ENCODE measurements at regions of chrX and their contacts with region 1.

Region 1: DNA sequence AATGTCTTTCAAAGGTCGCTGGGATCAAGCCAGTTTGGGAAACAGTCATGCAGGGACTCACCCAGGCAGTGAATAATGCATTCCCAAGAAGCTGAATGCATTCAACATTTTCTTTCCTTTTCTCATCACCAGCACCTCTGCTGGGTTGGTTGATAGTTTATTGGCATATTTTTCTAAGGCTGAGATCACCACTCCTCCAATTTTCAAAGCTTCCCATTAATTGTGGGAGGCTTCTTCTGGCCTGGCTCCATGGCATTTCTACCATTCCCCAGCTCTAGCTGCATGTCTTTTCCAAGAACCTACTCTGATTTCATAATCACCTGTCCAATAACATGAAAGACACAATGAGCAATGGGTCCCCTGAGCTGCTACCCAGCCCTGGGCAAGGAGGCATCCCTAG is 35.8 kb downstream of the CHRDL1 start:
- DNase-seq: no peak
- H3K4me3 ChIP-seq: no peak overlapping the region
- H3K27ac ChIP-seq: no peak overlapping the region
- H3K4me1 ChIP-seq: peaks cover 18% of the 10 kb centered on the region
- H3K27me3 ChIP-seq: no peaks in the 10 kb centered on the region
- CTCF ChIP-seq: no peak

Region 2: GRCh38 chrX:110509755-110510532 is 249.8 kb before region 1 on chrX:
- CTCF ChIA-PET with region 1: no interaction called
- POLR2A ChIA-PET with region 1: no interaction called
- intact Hi-C with region 1: no loop called
- DNase-seq: peak; percentile 26 to 72
- H3K4me3 ChIP-seq: no peak overlapping the region
- H3K27ac ChIP-seq: peak overlapping the region; percentile 42
- H3K4me1 ChIP-seq: peaks cover 17% of the 10 kb centered on the region; the same call in 1 of the 2 replicates
- H3K27me3 ChIP-seq: no peaks in the 10 kb centered on the region
- CTCF ChIP-seq: no peak

Region 3: DNA sequence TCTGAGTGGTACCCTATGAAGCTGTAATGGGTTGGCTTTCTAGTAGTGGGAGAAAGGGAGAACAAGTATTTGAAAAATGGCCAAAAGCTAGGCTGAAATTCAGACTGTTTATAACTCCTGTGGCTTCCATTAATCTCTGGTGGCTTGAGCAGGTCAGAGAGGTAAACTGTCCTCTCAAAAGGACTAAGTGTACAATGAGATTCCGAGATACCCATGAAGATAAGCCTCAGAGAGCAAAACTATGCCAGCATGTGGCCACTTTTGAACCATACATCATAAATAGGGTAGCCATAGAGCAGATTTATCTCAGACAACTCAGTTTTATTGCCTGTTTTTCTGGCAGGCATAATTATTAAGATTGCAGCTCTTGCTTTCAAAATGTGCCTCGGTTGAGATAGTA is 53.3 kb before region 1 on chrX:
- CTCF ChIA-PET with region 1: no interaction called
- POLR2A ChIA-PET with region 1: no interaction called
- intact Hi-C with region 1: no loop called
- DNase-seq: no peak
- H3K4me3 ChIP-seq: no peak overlapping the region
- H3K27ac ChIP-seq: no peak overlapping the region
- H3K4me1 ChIP-seq: no peaks in the 10 kb centered on the region
- H3K27me3 ChIP-seq: no peaks in the 10 kb centered on the region
- CTCF ChIP-seq: no peak

Region 4: DNA sequence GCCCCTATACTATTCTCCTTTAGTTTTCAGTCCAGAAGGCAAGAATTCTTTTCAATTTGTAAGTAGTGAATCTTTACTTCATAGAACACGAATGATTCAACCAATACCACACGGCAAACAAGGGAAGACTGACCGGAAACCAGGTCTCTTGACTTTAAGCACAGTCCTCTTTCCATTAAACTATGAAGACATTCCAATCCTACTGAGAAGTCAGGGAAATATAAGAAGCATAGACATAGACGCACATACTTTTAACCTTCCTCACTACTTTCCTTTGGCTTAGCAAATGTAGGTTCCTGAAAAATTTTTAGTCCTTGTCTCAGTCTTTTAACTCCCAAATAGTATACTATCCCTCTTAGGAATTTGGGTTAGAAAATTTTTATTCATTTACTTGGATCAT is 26.7 kb after region 1 on chrX:
- CTCF ChIA-PET with region 1: no interaction called
- POLR2A ChIA-PET with region 1: no interaction called
- intact Hi-C with region 1: loop called (anchors 5 kb)
- DNase-seq: peak in 1 of 2 experiments; percentile 11
- H3K4me3 ChIP-seq: no peak overlapping the region
- H3K27ac ChIP-seq: no peak overlapping the region
- H3K4me1 ChIP-seq: no peaks in the 10 kb centered on the region
- H3K27me3 ChIP-seq: no peaks in the 10 kb centered on the region
- CTCF ChIP-seq: no peak

Region 5: DNA sequence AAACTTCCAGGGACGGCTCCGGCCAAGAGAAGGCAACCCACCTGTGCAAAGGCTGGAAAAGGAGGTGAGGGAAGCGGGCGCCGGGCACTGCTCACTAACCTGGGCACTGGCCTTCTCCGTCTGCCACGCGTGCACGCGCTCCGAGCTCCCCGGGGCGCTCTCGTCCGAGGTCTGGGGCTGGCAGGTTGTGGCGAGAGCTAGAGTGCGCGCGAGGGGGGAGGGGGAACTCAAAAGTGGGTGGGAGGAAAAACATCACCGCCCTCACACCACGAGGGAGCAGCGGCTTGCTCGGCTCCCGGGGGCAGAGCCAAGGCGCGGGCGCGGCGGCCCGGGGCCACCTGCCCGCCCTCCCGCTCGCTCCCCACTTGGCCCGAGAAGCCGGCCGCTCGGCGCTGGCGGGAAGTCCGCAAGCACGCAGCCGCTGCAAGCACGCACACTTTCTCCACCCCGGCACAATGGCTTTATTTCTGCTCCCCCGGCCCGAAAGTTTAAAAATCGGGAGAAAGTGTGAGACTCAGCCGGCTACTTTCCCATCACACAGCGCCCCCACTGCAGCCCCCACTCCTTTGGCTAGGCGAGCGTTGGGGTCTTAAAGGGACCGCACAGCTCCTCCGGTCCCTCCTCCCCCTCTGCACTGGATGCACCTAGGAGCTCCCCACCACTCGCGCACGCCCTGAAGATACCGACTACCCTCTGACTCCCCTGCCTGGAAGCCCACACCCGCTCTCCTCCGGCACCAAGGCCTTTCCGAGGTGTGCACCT is 36.0 kb after region 1 on chrX and contains the start of gene CHRDL1:
- CTCF ChIA-PET with region 1: no interaction called
- POLR2A ChIA-PET with region 1: interaction called, 19 read pairs
- intact Hi-C with region 1: loop called (anchors 5 kb)
- DNase-seq: peak in 1 of 2 experiments; percentile 77
- H3K4me3 ChIP-seq: peak within 1 kb of the TSS; percentile 63
- H3K27ac ChIP-seq: no peak within 1 kb of the TSS
- H3K4me1 ChIP-seq: peaks cover 5% of the 10 kb centered on the region; the same call in 1 of the 2 replicates
- H3K27me3 ChIP-seq: no peaks in the 10 kb centered on the region
- CTCF ChIP-seq: no peak
- total RNA-seq, gene CHRDL1: 18.8 and 25.7 TPM in 2 replicates

Measured in PC-9 (cell line).